Caco-2 (cell line): ENCODE measurements at regions of chr17 and their contacts with region 1.

Region 1: GRCh38 chr17:29608891-29609361 is 13.8 kb downstream of the CORO6 start:
- DNase-seq: no peak
- H3K4me3 ChIP-seq: no peak overlapping the region
- H3K4me3 Mint-ChIP-seq: no peak overlapping the region
- H3K27ac Mint-ChIP-seq: no peak overlapping the region
- H3K4me1 ChIP-seq: no peaks in the 10 kb centered on the region
- H3K4me1 Mint-ChIP-seq: no peaks in the 10 kb centered on the region
- H3K27me3 ChIP-seq: no peaks in the 10 kb centered on the region
- H3K27me3 Mint-ChIP-seq: no peaks in the 10 kb centered on the region
- CTCF ChIP-seq: no peak

Region 2: DNA sequence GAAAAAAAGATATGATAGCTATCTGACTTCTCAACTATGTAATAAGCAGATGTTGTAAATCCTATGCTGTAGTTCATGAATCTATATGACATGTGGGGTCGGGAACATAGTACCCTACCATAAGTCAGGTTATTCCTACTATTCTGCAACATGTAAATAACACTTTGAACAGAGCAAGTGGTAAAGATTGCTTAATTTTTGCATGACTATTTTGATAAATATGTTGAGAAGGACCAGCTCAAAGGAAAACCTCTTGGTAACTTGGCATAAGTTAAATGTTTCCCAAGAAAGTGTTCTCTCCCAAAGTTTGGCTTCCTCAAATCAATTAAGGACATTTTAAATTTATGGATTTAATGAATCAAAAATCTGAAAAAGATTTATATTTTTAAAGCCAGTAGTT is 104.2 kb before region 1 on chr17:
- CTCF ChIA-PET with region 1: no interaction called
- POLR2A ChIA-PET with region 1: no interaction called
- intact Hi-C with region 1: no loop called
- DNase-seq: no peak
- H3K4me3 ChIP-seq: no peak overlapping the region
- H3K4me3 Mint-ChIP-seq: no peak overlapping the region
- H3K27ac Mint-ChIP-seq: no peak overlapping the region
- H3K4me1 ChIP-seq: no peaks in the 10 kb centered on the region
- H3K4me1 Mint-ChIP-seq: no peaks in the 10 kb centered on the region
- H3K27me3 ChIP-seq: no peaks in the 10 kb centered on the region
- H3K27me3 Mint-ChIP-seq: no peaks in the 10 kb centered on the region
- CTCF ChIP-seq: no peak

Region 3: GRCh38 chr17:29568331-29569244 is 40.3 kb before region 1 on chr17 and contains the start of gene TP53I13:
- CTCF ChIA-PET with region 1: no interaction called
- POLR2A ChIA-PET with region 1: no interaction called
- intact Hi-C with region 1: no loop called
- DNase-seq: peak; percentile 92 to 93
- H3K4me3 ChIP-seq: peak within 1 kb of the TSS; percentile 87
- H3K4me3 Mint-ChIP-seq: peak within 1 kb of the TSS; percentile 97
- H3K27ac Mint-ChIP-seq: peak within 1 kb of the TSS; percentile 85
- H3K4me1 ChIP-seq: peaks cover 10% of the 10 kb centered on the region; the same call in 1 of the 2 replicates
- H3K4me1 Mint-ChIP-seq: peaks cover 6% of the 10 kb centered on the region
- H3K27me3 ChIP-seq: no peaks in the 10 kb centered on the region
- H3K27me3 Mint-ChIP-seq: no peaks in the 10 kb centered on the region
- CTCF ChIP-seq: no peak
- total RNA-seq, gene TP53I13: 43.9 and 49.2 TPM in 2 replicates

Region 4: DNA sequence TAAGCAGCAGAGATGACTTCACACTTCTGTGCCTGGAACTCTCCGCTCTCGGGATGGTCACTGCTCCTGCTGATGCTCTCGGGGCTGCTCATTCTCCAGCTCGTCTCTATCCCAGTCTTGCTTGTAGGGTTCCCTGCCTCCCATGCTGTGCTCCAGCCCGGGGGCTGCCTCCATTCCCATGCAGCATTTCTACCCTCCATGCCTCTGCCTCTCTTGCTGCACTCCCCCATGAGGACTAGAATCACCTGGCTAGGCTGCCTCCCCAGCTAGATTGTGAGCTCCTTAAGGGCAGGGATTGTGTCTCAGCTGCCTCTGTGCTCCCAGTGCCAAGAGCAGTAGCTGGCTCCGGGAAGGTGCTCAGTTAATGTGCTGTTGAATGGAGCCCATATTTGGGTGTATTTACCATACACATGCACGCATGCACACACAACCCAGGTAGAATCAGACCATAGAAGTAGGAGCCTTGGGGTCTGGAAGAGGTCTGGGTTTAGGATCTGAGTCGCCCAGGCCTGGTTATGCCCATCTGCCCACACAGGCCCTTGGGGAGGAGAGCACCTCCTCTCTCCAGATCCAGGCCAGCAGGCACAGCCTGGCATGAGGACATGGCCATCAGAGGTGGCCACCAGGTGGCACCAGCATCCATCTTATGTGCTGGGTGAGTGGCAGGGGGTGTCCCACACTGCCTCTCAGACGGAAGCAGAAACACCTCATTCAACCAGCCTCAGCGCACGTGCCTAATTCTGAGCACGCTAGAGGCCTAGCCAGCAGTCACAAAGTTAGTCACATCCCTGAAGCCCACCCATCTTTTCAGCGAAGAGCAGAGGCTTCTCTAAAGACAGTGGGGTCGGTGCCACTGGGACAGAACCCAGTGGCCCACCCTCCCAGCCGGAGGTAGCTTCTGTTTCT is 28.8 kb before region 1 on chr17:
- CTCF ChIA-PET with region 1: no interaction called
- POLR2A ChIA-PET with region 1: no interaction called
- intact Hi-C with region 1: no loop called
- DNase-seq: peak; percentile 75 to 84
- H3K4me3 ChIP-seq: no peak overlapping the region
- H3K4me3 Mint-ChIP-seq: no peak overlapping the region
- H3K27ac Mint-ChIP-seq: no peak overlapping the region
- H3K4me1 ChIP-seq: peaks cover under 1% of the 10 kb centered on the region
- H3K4me1 Mint-ChIP-seq: no peaks in the 10 kb centered on the region
- H3K27me3 ChIP-seq: no peaks in the 10 kb centered on the region
- H3K27me3 Mint-ChIP-seq: no peaks in the 10 kb centered on the region
- CTCF ChIP-seq: peak; percentile 82 to 88

Region 5: DNA sequence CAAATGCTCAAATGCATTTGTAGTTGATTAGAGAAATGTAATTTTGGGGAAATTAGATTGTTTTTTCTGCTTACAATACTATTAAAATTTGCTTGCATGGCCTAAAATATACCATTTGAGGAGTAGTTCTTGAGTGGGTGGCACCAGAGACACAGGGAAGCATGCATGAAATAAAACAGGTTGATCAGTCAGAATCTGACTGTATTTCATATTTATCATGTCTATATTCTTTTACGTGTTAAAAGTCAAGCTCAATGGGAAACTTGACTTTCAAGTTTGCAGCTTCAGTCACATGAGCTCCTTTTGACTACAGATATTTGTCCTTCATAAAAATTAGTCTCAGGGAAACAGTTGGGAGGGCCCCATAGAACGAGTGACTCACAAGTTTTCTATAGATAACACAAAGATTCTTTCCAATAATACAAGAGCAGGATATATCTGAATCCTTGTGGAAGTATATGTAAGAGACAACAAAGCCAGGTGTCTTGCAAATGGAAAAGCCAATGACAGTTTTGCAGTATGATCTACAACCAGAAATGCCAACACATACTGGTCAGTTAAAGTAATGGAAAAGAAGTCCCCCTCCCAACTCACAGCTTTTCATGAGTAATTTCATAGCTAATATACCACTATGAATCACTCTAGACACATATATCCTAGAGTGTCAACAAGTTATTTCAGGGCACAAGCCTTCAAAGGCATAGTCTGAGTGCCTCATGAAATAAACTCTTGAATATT is 56.0 kb after region 1 on chr17:
- CTCF ChIA-PET with region 1: interaction called, 12 read pairs
- POLR2A ChIA-PET with region 1: no interaction called
- intact Hi-C with region 1: no loop called
- DNase-seq: peak in 1 of 2 experiments; percentile 20
- H3K4me3 ChIP-seq: no peak overlapping the region
- H3K4me3 Mint-ChIP-seq: no peak overlapping the region
- H3K27ac Mint-ChIP-seq: no peak overlapping the region
- H3K4me1 ChIP-seq: peaks cover 23% of the 10 kb centered on the region
- H3K4me1 Mint-ChIP-seq: peaks cover 22% of the 10 kb centered on the region
- H3K27me3 ChIP-seq: no peaks in the 10 kb centered on the region
- H3K27me3 Mint-ChIP-seq: no peaks in the 10 kb centered on the region
- CTCF ChIP-seq: no peak